Prostate gland (tissue), 2 donors: ENCODE measurements at regions of chr5 and their contacts with region 1.

Region 1: GRCh38 chr5:94618493-94619328 is at the starts of genes KIAA0825 and SLF1:
- DNase-seq: peak; percentile 89
- H3K4me3 ChIP-seq: peak within 1 kb of the TSS; percentile 61 to 63
- H3K27ac ChIP-seq: peak within 1 kb of the TSS; percentile 40 to 74
- H3K4me1 ChIP-seq: no peaks in the 10 kb centered on the region
- H3K27me3 ChIP-seq: no peaks in the 10 kb centered on the region
- CTCF ChIP-seq: peak in 1 of 4 experiments; percentile 3
- POLR2A ChIP-seq: peak; percentile 27
- total RNA-seq, gene KIAA0825: 3.9 to 4.1 TPM
- total RNA-seq, gene SLF1: 4.6 to 34.4 TPM

Region 2: DNA sequence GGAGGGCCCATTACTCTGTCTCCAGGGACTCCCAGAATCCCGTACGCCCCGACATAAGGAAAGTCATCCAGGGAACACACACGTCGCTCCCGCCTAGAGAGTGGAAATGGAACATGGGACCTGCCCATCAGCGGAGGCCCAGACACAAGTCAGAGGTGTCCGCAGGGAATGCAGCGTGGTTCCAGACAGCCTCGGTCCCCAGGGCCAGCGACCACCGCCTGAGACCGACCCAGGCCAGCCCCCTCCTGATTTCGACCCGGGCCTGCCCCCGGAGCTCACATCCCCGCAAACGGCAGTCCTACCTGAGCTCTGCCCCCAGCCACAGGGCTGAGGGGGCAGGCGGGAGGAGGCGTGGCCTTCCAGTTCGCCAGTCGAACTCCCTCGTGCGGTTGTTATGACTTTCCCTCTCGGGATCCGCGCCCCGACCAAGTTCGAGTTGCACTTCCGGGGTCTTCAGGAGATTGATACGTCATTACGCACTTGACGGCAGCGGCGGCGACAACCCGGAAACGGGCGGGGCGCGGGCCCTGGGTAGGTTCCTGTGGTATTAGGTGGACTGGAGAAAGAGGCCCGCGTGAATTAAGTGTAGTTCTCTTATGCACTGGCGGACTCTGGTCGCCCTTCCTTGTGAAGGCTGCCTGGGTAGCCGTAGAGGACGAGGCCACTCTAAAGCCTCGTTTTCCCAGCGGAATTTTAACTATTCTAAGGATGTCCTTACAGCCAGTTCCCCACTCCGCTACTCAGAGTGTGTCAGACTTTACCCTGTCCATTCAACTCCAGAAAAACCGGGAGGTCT is 507.3 kb before region 1 on chr5:
- intact Hi-C with region 1: loop called (anchors 5 kb)
- DNase-seq: peak; percentile 96
- H3K4me3 ChIP-seq: peak overlapping the region; percentile 48 to 74
- H3K27ac ChIP-seq: peak overlapping the region; percentile 82 to 89
- H3K4me1 ChIP-seq: no peaks in the 10 kb centered on the region
- H3K27me3 ChIP-seq: no peaks in the 10 kb centered on the region
- CTCF ChIP-seq: peak in 3 of 4 experiments; percentile 23 to 33 (median 25)
- POLR2A ChIP-seq: peak; percentile 63